ENCODE measurements at regions of chr2 and their contacts with region 1.

Region 1: GRCh38 chr2:113370478-113371091 is 66.9 kb upstream of the ZNG1B start:
- DNase-seq: peak; percentile 80
- H3K4me3 Mint-ChIP-seq: no peak overlapping the region
- H3K27ac Mint-ChIP-seq: no peak overlapping the region
- H3K4me1 Mint-ChIP-seq: peaks cover 7% of the 10 kb centered on the region
- H3K27me3 Mint-ChIP-seq: no peaks in the 10 kb centered on the region
- CTCF ChIP-seq: peak; percentile 76

Region 2: DNA sequence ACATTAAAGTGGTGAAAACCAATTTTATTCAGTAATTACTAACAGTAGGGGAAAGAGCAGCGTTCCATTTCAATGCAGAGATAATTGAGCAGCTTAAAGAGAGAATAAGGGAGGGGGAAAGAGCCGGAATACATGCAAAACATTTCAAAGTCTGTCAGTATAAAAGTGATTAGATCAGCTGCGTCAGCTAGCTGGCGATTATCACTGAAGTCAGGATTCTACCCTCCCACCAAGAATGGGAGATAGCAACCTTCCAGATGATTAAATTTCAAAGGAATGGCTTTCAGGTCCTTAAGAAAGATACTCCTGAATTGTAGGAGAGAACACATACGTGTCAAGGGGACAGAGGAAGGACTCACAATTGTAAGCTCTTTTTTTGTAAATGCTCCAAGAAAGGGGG is 1097.9 kb before region 1 on chr2:
- CTCF ChIA-PET with region 1: no interaction called
- POLR2A ChIA-PET with region 1: no interaction called
- intact Hi-C with region 1: no loop called
- DNase-seq: no peak
- H3K4me3 Mint-ChIP-seq: no peak overlapping the region
- H3K27ac Mint-ChIP-seq: no peak overlapping the region
- H3K4me1 Mint-ChIP-seq: no peaks in the 10 kb centered on the region
- H3K27me3 Mint-ChIP-seq: no peaks in the 10 kb centered on the region
- CTCF ChIP-seq: no peak

Region 3: DNA sequence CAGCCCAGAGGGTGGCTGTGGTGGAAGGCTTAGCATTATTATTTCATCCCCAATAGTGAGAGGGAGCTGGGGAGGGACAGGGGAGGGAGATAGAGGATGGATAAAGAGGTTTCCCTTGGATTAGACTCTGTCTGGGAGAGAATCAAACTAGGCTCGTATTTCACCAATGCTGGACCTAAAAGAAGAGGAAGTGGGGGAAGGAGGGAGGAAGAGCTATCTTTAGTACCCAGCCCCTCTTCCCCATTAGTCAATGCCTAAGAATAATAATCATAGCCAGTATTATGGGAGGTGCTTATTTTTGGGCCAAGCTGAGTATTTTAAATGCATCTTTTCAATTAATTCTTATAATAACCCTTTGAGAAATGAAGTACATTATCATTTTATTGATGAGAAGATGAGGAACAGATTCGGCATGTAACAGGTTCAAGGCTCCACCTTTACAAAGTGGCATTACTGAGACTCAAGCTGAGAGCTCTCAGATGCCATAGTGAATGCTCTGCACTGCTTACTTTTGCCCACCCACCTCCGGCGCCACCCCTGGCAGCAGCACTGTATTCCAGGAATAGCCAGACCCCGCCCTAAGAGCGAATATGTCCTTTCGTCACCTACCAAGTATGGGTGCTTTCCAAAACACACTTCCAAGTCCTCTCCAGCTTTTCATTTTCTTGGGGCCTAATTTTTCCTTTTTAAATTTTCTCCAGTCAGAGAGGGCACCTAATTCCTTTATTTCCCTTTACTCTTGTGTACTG is 112.9 kb before region 1 on chr2:
- CTCF ChIA-PET with region 1: interaction called, 143 read pairs
- POLR2A ChIA-PET with region 1: no interaction called
- intact Hi-C with region 1: no loop called
- DNase-seq: no peak
- H3K4me3 Mint-ChIP-seq: no peak overlapping the region
- H3K27ac Mint-ChIP-seq: no peak overlapping the region
- H3K4me1 Mint-ChIP-seq: peaks cover 9% of the 10 kb centered on the region
- H3K27me3 Mint-ChIP-seq: no peaks in the 10 kb centered on the region
- CTCF ChIP-seq: no peak

Region 4: GRCh38 chr2:113282747-113283533 is 87.6 kb before region 1 on chr2:
- CTCF ChIA-PET with region 1: no interaction called
- POLR2A ChIA-PET with region 1: no interaction called
- intact Hi-C with region 1: no loop called
- DNase-seq: peak; percentile 78
- H3K4me3 Mint-ChIP-seq: peak overlapping the region; percentile 33
- H3K27ac Mint-ChIP-seq: peak overlapping the region; percentile 84
- H3K4me1 Mint-ChIP-seq: peaks cover 42% of the 10 kb centered on the region
- H3K27me3 Mint-ChIP-seq: no peaks in the 10 kb centered on the region
- CTCF ChIP-seq: no peak

Region 5: GRCh38 chr2:113342650-113343049 is 27.9 kb before region 1 on chr2:
- CTCF ChIA-PET with region 1: interaction called, 10 read pairs
- POLR2A ChIA-PET with region 1: no interaction called
- intact Hi-C with region 1: no loop called
- DNase-seq: no peak
- H3K4me3 Mint-ChIP-seq: no peak overlapping the region
- H3K27ac Mint-ChIP-seq: no peak overlapping the region
- H3K4me1 Mint-ChIP-seq: peaks cover 7% of the 10 kb centered on the region
- H3K27me3 Mint-ChIP-seq: no peaks in the 10 kb centered on the region
- CTCF ChIP-seq: no peak

Region 6: GRCh38 chr2:113407446-113408099 is 37.0 kb after region 1 on chr2:
- CTCF ChIA-PET with region 1: no interaction called
- POLR2A ChIA-PET with region 1: no interaction called
- intact Hi-C with region 1: no loop called
- DNase-seq: peak; percentile 48
- H3K4me3 Mint-ChIP-seq: no peak overlapping the region
- H3K27ac Mint-ChIP-seq: no peak overlapping the region
- H3K4me1 Mint-ChIP-seq: no peaks in the 10 kb centered on the region
- H3K27me3 Mint-ChIP-seq: no peaks in the 10 kb centered on the region
- CTCF ChIP-seq: peak; percentile 35

Measured in MCF 10A (cell line).